Endothelial cell of umbilical vein (primary cell): ENCODE measurements at regions of chr21 and their contacts with region 1.

Region 1: DNA sequence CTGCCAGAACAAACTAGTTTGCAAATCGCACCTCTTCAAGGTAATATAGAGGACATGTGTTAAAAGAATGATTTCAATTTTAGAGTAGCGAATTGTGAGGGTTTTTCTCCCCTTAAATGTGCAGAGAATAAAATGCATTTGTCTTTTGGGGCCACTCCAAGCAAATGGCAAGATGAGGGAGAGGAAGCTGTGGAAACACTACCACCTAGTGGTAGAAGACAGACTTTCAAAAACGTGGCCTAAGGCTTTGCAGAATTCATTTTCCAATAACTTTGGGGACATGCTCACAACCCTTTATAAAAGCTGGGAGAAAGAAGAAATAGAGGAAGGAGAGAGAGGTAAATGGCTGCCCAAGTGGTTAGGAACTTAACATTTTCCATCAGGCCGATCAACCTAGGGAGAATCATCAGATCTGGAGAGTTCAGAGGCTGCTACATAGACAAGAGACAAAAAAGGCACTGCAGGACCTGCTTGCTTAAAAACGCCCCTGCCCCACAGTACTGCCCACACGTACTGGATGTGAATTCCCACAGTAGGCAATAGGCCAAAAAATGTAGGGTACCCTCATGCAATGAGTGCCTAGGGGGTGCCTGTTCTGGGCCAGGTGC is 15.7 kb upstream of the RCAN1 start:
- DNase-seq: peak; percentile 62
- H3K4me3 ChIP-seq: no peak overlapping the region
- H3K27ac ChIP-seq: no peak overlapping the region
- H3K4me1 ChIP-seq: no peaks in the 10 kb centered on the region
- H3K27me3 ChIP-seq: peaks cover 5 to 14% of the 10 kb centered on the region in 2 experiments
- CTCF ChIP-seq: peak; percentile 54 to 68
- POLR2A ChIP-seq: no peak

Region 2: GRCh38 chr21:34362136-34362444 is 268.6 kb before region 1 on chr21:
- CTCF ChIA-PET with region 1: interaction called, 34 read pairs
- POLR2A ChIA-PET with region 1: no interaction called
- dilution Hi-C with region 1: no loop called
- intact Hi-C with region 1: loop called (anchors 1 kb)
- DNase-seq: no peak
- H3K4me3 ChIP-seq: no peak overlapping the region
- H3K27ac ChIP-seq: no peak overlapping the region
- H3K4me1 ChIP-seq: no peaks in the 10 kb centered on the region
- H3K27me3 ChIP-seq: peaks cover 8 to 17% of the 10 kb centered on the region in 2 experiments
- CTCF ChIP-seq: no peak
- POLR2A ChIP-seq: no peak

Region 3: DNA sequence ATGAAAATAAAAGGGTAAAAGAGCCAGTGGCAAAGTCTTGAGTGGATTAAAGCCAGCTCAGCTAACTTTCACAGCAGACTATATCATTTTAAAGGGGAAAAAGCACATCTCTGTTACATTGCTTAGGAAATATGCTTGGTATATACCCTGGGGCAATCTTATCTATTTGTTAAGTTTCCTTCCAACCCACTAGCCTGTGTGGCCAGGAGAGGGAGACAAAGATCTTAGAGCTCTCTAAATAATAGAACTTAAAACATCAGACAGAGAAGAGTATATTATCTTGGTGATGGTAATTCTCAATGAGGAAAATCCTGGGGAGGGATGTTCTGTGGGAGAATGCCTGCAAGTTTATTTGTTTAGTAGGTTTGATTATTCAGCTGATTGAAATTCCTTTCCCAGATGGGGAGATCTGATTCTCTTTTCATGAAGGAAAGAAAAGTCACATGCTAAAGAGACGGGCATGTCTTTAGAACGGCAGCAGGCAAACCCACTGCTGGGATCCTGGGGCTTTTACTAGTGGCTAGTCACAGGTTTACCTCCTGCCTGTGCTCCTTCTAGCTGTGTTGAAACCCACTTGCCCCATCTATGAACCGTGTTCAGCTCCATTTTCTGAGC is 263.2 kb before region 1 on chr21:
- CTCF ChIA-PET with region 1: interaction called, 34 read pairs
- POLR2A ChIA-PET with region 1: no interaction called
- dilution Hi-C with region 1: no loop called
- intact Hi-C with region 1: loop called (anchors 1 kb)
- DNase-seq: peak; percentile 55
- H3K4me3 ChIP-seq: no peak overlapping the region
- H3K27ac ChIP-seq: no peak overlapping the region
- H3K4me1 ChIP-seq: no peaks in the 10 kb centered on the region
- H3K27me3 ChIP-seq: peaks cover 11 to 12% of the 10 kb centered on the region in 2 experiments
- CTCF ChIP-seq: peak; percentile 46 to 53
- POLR2A ChIP-seq: no peak

Region 4: DNA sequence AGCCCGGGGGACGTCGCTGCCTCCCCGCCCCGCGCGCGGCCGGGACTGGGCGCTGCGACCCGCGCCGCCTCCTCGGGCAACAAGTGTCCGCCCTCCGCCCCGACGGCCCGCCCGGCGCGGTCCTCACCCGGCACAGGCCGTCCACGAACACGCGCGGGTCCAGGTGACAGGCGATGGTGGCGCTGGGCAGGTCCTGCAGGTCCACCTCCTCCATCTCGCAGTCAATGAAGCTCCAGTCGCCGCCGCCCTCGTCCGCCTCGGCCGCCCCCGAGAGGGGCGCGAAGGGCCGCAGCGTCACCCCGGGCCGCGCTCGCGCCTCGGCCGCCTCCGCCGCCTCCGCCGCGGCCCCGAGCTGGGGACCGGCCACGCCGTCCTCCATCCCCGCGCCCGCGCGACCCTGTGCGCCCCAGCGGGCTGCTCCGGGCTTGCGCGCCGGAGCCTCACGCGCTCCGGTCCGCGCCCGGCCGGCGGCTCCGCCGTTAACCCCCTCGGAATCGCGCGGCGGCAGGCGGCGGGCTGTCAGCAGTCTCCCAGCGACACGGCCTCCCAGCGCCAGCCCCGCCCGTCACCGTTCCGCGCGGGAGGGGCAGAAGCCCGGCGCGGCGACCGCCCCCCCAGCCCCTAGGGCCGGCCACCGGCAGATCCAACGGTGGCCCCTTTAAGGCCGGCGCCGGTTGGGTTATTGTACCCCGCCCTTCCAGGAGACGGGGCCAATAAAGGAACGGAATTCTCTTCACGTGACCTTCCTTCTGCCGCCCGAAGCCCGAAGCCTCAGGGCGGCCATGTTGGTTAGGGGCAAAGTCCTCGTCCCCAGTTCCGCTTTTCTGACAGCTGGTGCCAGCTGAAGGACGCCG is 15.8 kb before region 1 on chr21 and contains the start of gene RCAN1:
- CTCF ChIA-PET with region 1: interaction called, 13 read pairs
- POLR2A ChIA-PET with region 1: no interaction called
- dilution Hi-C with region 1: no loop called
- intact Hi-C with region 1: no loop called
- DNase-seq: peak; percentile 92
- H3K4me3 ChIP-seq: peak within 1 kb of the TSS; percentile 69 to 83 (median 75)
- H3K27ac ChIP-seq: no peak within 1 kb of the TSS
- H3K4me1 ChIP-seq: peaks cover 4% of the 10 kb centered on the region
- H3K27me3 ChIP-seq: peaks cover 7 to 8% of the 10 kb centered on the region in 2 experiments
- CTCF ChIP-seq: no peak
- POLR2A ChIP-seq: no peak
- total RNA-seq, gene RCAN1: 15.9 and 16.5 TPM in 2 replicates

Region 5: DNA sequence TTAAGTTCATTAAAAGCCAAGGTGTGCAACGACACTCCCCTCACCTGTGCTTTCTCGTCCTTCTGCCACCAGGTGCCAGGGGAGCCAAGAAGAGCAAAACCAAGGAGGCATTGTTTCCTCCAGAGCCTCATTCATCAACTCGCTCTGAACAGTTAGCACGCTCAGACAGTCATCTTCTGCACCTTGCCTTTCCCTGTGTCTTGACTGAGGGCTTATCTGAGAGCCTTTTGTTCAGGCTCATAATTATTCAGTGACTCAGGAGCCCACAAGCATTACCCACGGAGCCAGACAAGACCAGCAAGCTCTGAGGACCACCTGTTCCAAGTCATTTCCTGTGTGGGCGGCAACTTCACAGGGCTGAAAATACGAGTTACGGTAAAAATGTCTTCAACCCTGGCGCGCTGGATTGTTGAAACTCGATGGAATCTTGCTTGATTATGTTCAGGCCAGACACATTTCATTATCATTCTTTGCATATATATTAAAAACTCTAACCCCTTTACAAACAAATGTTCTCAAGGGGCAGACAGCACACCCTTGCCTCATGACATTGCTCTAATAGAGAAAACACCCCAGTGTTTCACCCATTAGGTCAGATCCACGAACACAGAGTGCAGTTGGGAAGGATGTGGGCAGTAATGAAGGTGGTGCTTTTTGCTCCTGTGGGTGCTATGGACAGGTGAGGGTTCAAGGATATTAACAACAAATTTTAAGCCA is 508.2 kb after region 1 on chr21:
- CTCF ChIA-PET with region 1: no interaction called
- POLR2A ChIA-PET with region 1: no interaction called
- dilution Hi-C with region 1: no loop called
- intact Hi-C with region 1: no loop called
- DNase-seq: no peak
- H3K4me3 ChIP-seq: no peak overlapping the region
- H3K27ac ChIP-seq: no peak overlapping the region
- H3K4me1 ChIP-seq: peaks cover 9% of the 10 kb centered on the region
- H3K27me3 ChIP-seq: no peaks in the 10 kb centered on the region
- CTCF ChIP-seq: no peak
- POLR2A ChIP-seq: no peak